ENCODE measurements at regions of chr20 and their contacts with region 1.

Region 1: DNA sequence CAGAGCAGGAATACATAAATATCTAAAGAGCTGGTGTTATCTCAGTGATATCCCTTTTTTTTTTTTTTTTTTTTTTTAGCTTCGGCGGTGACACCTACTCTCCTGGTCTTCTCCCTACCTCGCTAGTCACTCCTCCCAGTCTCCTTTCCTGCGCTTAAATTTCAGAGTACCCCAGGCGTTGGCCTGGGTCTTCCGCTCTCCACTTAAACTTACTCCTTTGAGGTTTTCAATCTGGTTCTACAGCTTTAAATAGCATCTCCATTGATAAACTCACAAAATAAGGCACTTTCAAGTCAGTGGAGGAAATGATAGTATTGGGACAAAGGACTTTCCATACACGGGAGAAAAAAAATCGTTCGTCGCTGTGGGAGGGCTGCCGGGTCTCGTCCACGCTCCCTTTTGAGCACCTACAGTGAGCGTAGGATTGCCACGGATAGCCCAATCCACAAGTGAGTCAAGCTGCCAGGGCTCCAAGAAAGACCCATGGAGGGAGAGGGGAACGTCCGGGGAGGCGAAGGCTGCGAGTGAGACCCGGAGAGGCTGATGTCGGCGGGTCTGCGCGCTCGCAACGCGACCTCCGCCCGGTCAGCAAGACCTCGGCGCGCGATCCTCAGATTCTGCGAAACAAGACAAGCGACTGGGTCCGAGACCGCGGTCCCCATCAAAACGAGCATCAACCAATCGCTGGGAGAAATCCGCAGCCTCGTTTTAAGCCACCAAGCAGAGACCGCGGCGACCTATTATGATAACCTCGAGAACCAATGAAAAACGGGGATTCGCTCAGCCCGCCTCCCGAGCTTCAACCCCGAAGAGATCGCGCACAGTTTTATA is 672 bp upstream of the SRSF6 start:
- DNase-seq: peak; percentile 79 to 94
- ATAC-seq: peak; percentile 72 to 81 (median 75)
- H3K4me3 ChIP-seq: peak overlapping the region; percentile 99
- H3K4me3 Mint-ChIP-seq: peak overlapping the region; percentile 98
- H3K27ac ChIP-seq: peak overlapping the region; percentile 100
- H3K27ac Mint-ChIP-seq: peak overlapping the region; percentile 98 to 99
- H3K4me1 ChIP-seq: peaks cover 16% of the 10 kb centered on the region
- H3K4me1 Mint-ChIP-seq: peaks cover 32 to 33% of the 10 kb centered on the region in 2 donors
- H3K27me3 ChIP-seq: no peaks in the 10 kb centered on the region
- H3K27me3 Mint-ChIP-seq: peaks cover 0 to 3% of the 10 kb centered on the region in 2 donors
- CTCF ChIP-seq: no peak

Region 2: GRCh38 chr20:43442282-43442880 is 14.6 kb before region 1 on chr20:
- intact Hi-C with region 1: no loop called
- DNase-seq: no peak
- ATAC-seq: no peak
- H3K4me3 ChIP-seq: no peak overlapping the region
- H3K4me3 Mint-ChIP-seq: no peak overlapping the region
- H3K27ac ChIP-seq: no peak overlapping the region
- H3K27ac Mint-ChIP-seq: no peak overlapping the region
- H3K4me1 ChIP-seq: no peaks in the 10 kb centered on the region
- H3K4me1 Mint-ChIP-seq: no peaks in the 10 kb centered on the region
- H3K27me3 ChIP-seq: no peaks in the 10 kb centered on the region
- H3K27me3 Mint-ChIP-seq: peaks cover 0 to 7% of the 10 kb centered on the region in 2 donors
- CTCF ChIP-seq: no peak

Region 3: GRCh38 chr20:43514062-43514999 is 57.3 kb after region 1 on chr20:
- intact Hi-C with region 1: loop called (anchors 1 kb)
- DNase-seq: peak; percentile 89 to 96
- ATAC-seq: peak; percentile 87 to 97 (median 89)
- H3K4me3 ChIP-seq: peak overlapping the region; percentile 57
- H3K4me3 Mint-ChIP-seq: peak overlapping the region; percentile 98
- H3K27ac ChIP-seq: peak overlapping the region; percentile 37
- H3K27ac Mint-ChIP-seq: peak overlapping the region; percentile 87 to 89
- H3K4me1 ChIP-seq: peaks cover 14% of the 10 kb centered on the region
- H3K4me1 Mint-ChIP-seq: peaks cover 6 to 25% of the 10 kb centered on the region in 2 donors
- H3K27me3 ChIP-seq: no peaks in the 10 kb centered on the region
- H3K27me3 Mint-ChIP-seq: peaks cover under 1 to 2% of the 10 kb centered on the region in 2 donors
- CTCF ChIP-seq: peak; percentile 13

Region 4: DNA sequence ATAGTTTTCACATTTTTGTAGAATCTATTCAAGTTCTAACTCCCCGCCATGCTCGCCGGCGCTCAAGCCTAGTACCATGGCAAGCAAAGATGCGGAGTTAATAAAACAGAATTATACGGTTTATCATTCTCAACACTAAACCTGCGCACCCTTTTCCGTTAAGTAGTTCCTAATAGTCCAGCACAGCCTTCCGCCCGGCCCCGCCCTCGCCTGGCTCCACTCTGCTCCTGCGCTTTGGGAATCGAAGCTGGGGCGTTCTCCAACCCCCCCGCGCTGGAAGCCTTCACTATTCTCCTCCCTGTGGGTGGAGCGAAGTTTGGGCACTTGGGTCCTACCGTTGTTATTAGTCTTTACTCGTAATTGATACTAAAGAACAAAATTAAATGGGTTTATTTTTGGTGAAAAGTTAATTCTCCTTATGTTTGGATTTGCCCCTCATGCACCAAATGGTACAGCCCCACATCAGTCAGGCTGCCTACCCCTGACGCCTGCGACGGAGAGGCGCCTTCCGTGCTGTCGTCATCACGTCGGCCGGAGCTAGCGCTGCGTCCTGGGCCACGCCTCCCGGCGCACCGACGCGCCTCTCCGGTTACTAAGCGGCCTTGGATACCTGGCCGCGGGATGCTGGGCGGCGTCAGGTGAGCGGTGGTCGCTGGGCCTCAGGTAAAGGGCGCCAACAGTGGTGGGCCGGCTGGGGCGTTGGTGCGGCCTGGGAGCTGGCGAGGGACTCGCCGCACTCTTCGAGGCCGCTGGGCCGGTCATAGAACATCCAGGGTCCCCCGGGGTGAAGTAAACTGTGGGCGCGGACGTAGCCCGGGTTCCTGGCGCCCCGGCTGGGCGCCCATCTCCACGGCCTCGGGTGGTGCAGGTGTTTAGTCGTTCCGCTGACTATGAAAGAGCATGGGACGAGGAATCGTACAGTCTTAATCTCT is 133.6 kb after region 1 on chr20 and contains the start of gene IFT52:
- intact Hi-C with region 1: loop called (anchors 2 kb)
- DNase-seq: peak; percentile 81 to 97
- ATAC-seq: peak; percentile 96 to 99 (median 96)
- H3K4me3 ChIP-seq: peak within 1 kb of the TSS; percentile 64
- H3K4me3 Mint-ChIP-seq: peak within 1 kb of the TSS; percentile 95
- H3K27ac ChIP-seq: peak within 1 kb of the TSS; percentile 93
- H3K27ac Mint-ChIP-seq: peak within 1 kb of the TSS; percentile 95 to 97
- H3K4me1 ChIP-seq: peaks cover 18% of the 10 kb centered on the region
- H3K4me1 Mint-ChIP-seq: peaks cover 19 to 21% of the 10 kb centered on the region in 2 donors
- H3K27me3 ChIP-seq: no peaks in the 10 kb centered on the region
- H3K27me3 Mint-ChIP-seq: peaks cover 0 to 7% of the 10 kb centered on the region in 2 donors
- CTCF ChIP-seq: no peak
- total RNA-seq, gene IFT52: 21.5 to 26.1 (median 22.4) TPM

Region 5: DNA sequence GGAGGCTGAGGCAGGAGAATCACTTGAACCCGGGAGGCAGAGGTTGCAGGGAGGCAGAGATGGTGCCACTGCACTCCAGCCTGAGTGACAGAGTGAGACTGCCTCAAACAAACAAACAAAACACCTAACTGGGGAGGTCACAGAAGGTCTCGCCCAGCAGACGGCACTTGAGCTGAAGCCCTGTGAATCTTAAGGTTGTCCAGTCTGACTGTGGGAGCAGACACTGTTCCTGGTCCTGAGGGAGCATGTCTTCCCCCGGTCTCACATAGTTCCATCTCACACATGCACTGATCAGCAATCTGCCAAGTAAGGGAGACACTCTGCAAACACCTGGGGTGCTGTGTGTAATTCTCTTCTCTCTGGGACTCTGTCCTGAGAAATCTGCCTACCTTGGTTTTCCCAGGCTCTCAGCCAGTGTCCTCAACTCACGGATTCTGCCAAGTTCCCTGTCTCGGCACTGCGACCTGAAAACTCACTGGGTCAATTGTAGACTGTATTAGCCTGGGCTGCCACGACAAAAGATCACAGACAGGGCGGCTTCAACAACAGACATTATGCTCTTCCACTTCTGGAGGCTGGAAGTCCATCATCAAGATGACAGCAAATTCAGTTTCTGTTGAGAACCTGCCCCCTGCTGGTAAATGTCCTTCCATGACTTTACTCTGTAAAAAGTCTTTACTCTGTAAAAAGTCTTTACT is 635.7 kb after region 1 on chr20:
- intact Hi-C with region 1: loop called (anchors 10 kb)
- DNase-seq: peak in 1 of 2 donors; percentile 63
- ATAC-seq: no peak
- H3K4me3 ChIP-seq: no peak overlapping the region
- H3K4me3 Mint-ChIP-seq: no peak overlapping the region
- H3K27ac ChIP-seq: no peak overlapping the region
- H3K27ac Mint-ChIP-seq: no peak overlapping the region
- H3K4me1 ChIP-seq: no peaks in the 10 kb centered on the region
- H3K4me1 Mint-ChIP-seq: no peaks in the 10 kb centered on the region
- H3K27me3 ChIP-seq: no peaks in the 10 kb centered on the region
- H3K27me3 Mint-ChIP-seq: peaks cover 19% of the 10 kb centered on the region in 2 donors
- CTCF ChIP-seq: peak; percentile 46

Measured in natural killer cell (primary cell).